ENCODE measurements at regions of chr18 and their contacts with region 1.

Region 1: DNA sequence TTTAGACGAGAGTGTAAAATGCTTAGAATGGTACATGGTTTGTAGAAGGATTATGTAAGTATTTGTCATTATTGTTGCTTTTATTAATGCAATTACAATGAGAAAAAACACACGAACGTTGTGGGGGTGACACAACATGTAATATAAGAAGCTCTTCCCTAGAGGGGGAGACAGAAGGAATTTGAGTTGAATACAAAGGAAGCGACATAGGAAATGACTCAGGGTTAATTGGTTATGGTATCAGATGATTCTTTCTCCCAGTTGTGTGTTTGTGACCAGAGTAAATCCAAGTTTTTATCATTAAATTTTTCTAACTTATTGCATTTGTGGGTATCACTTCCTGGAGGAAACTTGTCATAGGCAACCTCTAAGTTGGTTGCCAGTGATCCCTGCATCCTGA is 625.6 kb upstream of the CDH2 start:
- DNase-seq: no peak
- ATAC-seq: no peak
- H3K4me3 ChIP-seq: no peak overlapping the region
- H3K4me3 Mint-ChIP-seq: no peak overlapping the region
- H3K27ac ChIP-seq: no peak overlapping the region
- H3K27ac Mint-ChIP-seq: no peak overlapping the region
- H3K4me1 ChIP-seq: no peaks in the 10 kb centered on the region
- H3K4me1 Mint-ChIP-seq: no peaks in the 10 kb centered on the region
- H3K27me3 ChIP-seq: no peaks in the 10 kb centered on the region
- H3K27me3 Mint-ChIP-seq: no peaks in the 10 kb centered on the region
- CTCF ChIP-seq: no peak

Region 2: DNA sequence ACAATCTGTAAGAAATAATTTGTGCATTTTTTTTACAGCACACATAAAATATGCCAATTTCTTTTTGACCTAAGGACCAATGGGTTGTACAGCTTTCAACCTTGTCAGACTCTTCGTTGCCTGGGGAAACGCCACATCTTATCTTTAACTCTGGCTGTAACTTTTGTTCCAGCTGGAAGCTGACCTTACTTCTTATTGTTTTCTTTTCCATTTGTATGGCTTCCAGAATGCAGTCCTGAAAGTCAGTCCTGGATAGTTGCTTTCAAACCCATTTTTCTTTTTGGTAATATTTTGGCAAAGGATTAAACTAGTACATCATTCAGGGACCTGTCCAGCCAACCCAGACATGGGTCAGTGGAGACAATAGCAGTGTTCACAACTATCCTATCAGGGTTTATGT is 60.9 kb after region 1 on chr18:
- CTCF ChIA-PET with region 1: no interaction called
- POLR2A ChIA-PET with region 1: no interaction called
- intact Hi-C with region 1: loop called (anchors 10 kb)
- DNase-seq: no peak
- ATAC-seq: no peak
- H3K4me3 ChIP-seq: no peak overlapping the region
- H3K4me3 Mint-ChIP-seq: no peak overlapping the region
- H3K27ac ChIP-seq: no peak overlapping the region
- H3K27ac Mint-ChIP-seq: no peak overlapping the region
- H3K4me1 ChIP-seq: no peaks in the 10 kb centered on the region
- H3K4me1 Mint-ChIP-seq: no peaks in the 10 kb centered on the region
- H3K27me3 ChIP-seq: no peaks in the 10 kb centered on the region
- H3K27me3 Mint-ChIP-seq: no peaks in the 10 kb centered on the region
- CTCF ChIP-seq: no peak

Region 3: GRCh38 chr18:28875059-28875458 is 72.5 kb after region 1 on chr18:
- CTCF ChIA-PET with region 1: no interaction called
- POLR2A ChIA-PET with region 1: no interaction called
- intact Hi-C with region 1: no loop called
- DNase-seq: no peak
- ATAC-seq: no peak
- H3K4me3 ChIP-seq: no peak overlapping the region
- H3K4me3 Mint-ChIP-seq: no peak overlapping the region
- H3K27ac ChIP-seq: no peak overlapping the region
- H3K27ac Mint-ChIP-seq: no peak overlapping the region
- H3K4me1 ChIP-seq: no peaks in the 10 kb centered on the region
- H3K4me1 Mint-ChIP-seq: no peaks in the 10 kb centered on the region
- H3K27me3 ChIP-seq: no peaks in the 10 kb centered on the region
- H3K27me3 Mint-ChIP-seq: no peaks in the 10 kb centered on the region
- CTCF ChIP-seq: no peak